ENCODE measurements at regions of chr6 and their contacts with region 1.

Region 1: GRCh38 chr6:2841264-2842138 is at the start of gene SERPINB1:
- DNase-seq: peak; percentile 81
- ATAC-seq: peak; percentile 78
- H3K4me3 ChIP-seq: peak within 1 kb of the TSS; percentile 70 to 71
- H3K27ac ChIP-seq: peak within 1 kb of the TSS; percentile 64
- H3K4me1 ChIP-seq: peaks cover 54 to 77% of the 10 kb centered on the region in 2 experiments
- H3K27me3 ChIP-seq: no peaks in the 10 kb centered on the region
- CTCF ChIP-seq: no peak
- POLR2A ChIP-seq: peak; percentile 42
- RAD21 ChIP-seq: no peak
- total RNA-seq, gene SERPINB1: 73.2 TPM

Region 2: DNA sequence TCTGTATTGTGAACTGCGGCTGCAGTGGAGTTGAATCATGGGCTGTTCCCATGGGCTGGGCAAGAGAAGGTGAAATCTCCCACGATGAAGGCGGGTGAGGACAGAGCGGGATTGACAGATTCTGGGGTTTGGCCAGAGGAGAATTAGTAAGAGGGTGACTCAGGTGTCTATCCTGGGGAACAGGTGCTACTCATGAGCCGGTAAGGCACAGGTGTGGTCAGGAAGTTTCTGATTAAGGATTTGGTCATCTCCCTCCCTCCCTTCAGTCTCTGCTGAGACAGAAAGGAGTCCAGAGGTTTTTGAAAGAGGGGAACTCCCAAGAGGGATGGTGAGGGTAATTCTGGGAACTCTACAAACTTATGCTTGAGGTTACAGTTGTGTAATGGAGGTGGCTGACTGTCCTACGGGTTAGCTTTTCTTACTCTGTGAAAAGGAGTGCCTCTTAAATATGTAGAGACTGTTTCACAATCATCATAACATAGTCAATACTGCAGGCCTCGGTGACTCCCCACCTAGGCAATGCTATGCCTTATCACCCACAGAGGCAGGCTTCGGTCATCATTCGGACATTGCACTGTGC is 31.3 kb before region 1 on chr6:
- CTCF ChIA-PET with region 1: no interaction called
- POLR2A ChIA-PET with region 1: interaction called, 6 read pairs
- RAD21 ChIA-PET with region 1: no interaction called
- intact Hi-C with region 1: loop called (anchors 1 kb)
- DNase-seq: peak; percentile 96
- ATAC-seq: peak; percentile 96
- H3K4me3 ChIP-seq: peak overlapping the region; percentile 10 to 23; a peak in 3 of 4 replicates
- H3K27ac ChIP-seq: peak overlapping the region; percentile 20; the same call in 1 of the 2 replicates
- H3K4me1 ChIP-seq: peaks cover 14 to 34% of the 10 kb centered on the region in 2 experiments
- H3K27me3 ChIP-seq: no peaks in the 10 kb centered on the region
- CTCF ChIP-seq: no peak
- POLR2A ChIP-seq: no peak
- RAD21 ChIP-seq: no peak; the same call in none of the 2 replicates

Region 3: GRCh38 chr6:2831392-2831791 is 10.1 kb before region 1 on chr6:
- CTCF ChIA-PET with region 1: interaction called, 8 read pairs
- POLR2A ChIA-PET with region 1: interaction called, 13 read pairs
- RAD21 ChIA-PET with region 1: no interaction called
- intact Hi-C with region 1: no loop called
- DNase-seq: no peak
- ATAC-seq: no peak
- H3K4me3 ChIP-seq: no peak overlapping the region
- H3K27ac ChIP-seq: no peak overlapping the region
- H3K4me1 ChIP-seq: no peaks in the 10 kb centered on the region
- H3K27me3 ChIP-seq: no peaks in the 10 kb centered on the region
- CTCF ChIP-seq: no peak
- POLR2A ChIP-seq: no peak
- RAD21 ChIP-seq: peak; percentile 31; the same call in 1 of the 2 replicates

Region 4: DNA sequence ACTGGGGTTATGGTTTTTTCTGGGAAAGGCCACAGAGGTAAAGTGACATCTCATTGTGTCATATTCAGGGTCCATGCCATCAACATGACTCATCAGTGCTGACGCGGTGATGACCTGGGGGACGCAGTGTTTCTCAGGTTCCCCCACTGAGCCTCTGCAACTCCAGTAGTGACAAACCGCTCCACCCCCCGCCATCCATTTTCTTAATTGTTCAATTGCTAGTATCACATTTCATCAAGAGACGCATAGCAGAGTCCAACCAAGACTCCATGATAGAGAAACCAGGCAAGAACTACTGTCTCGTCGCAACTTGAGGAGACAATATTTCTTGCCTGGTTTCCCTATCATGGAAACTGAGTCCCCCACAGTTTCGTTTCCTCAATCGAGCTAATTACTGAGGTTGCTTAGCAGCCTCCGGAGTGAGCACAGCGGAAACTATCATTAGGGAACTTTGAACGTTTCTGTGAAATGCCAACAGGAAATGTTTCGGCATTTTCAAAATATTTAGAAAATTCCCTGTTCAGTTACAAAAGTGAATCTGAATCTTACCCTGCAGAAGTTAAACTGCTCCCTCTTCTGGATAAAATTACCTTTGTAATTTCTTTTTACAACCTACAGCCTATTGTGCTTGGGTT is 12.4 kb after region 1 on chr6:
- CTCF ChIA-PET with region 1: interaction called, 15 read pairs
- POLR2A ChIA-PET with region 1: interaction called, 14 read pairs
- RAD21 ChIA-PET with region 1: no interaction called
- intact Hi-C with region 1: no loop called
- DNase-seq: peak; percentile 87
- ATAC-seq: peak; percentile 47
- H3K4me3 ChIP-seq: peak overlapping the region; percentile 23 to 53
- H3K27ac ChIP-seq: peak overlapping the region; percentile 76
- H3K4me1 ChIP-seq: peaks cover 44 to 88% of the 10 kb centered on the region in 2 experiments
- H3K27me3 ChIP-seq: no peaks in the 10 kb centered on the region
- CTCF ChIP-seq: peak in 2 of 3 experiments; percentile 26 to 40; a peak in 2 of 6 replicates
- POLR2A ChIP-seq: no peak
- RAD21 ChIP-seq: no peak